Activated naive CD8-positive, alpha-beta T cell treated with anti-CD3 and anti-CD28 coated beads, Interleukin-2, amount 10 ng/mL, durations not matched to agents 7 days and 5 days (primary cell): ENCODE measurements at regions of chr18 and their contacts with region 1.

Region 1: DNA sequence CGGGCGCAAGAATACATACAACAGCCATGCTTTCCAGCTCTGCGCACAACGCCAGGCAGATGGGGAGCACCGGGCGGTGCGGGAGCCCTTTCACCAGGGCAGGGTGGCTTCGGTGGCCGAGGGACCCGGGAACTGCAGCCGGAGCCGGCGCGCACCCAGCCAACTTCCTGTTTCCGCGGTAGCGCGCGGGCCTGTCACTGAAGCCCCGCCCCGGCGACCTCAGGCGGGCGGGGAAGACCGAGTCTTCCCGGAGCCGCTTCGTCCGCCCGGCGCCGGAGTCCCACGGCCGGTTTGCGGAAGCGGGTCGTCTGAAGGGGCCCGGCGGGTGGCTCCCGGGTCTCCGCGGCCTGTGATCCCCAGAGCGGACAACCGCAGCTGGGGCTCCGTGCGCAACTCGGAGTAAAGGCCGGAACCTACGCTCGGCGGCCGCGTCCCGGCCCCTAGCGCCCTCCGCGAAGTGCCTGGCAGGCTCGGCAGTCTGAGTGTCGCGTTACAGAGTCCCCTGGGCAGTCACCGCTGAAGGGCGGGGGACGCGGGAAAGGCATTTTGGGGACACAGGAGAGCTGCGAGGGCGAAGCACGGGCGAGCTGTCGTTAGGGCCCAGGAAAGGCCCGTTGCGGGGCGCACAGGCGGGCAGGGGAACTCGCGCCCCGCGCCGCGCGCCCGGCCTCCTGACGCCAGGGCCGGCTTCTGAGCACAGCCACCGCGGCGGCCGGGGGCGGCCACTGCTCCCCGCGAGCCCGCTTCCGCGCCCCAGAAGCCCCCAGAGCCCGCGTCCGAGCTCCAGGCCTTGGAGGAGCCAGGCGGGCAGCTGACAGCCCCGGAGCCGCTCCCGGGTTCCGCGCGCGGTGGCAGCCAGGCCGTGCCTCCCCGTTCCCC is at the start of gene MPPE1:
- DNase-seq: peak; percentile 92
- ATAC-seq: peak; percentile 93
- H3K4me3 Mint-ChIP-seq: peak within 1 kb of the TSS; percentile 94
- H3K27ac Mint-ChIP-seq: peak within 1 kb of the TSS; percentile 92
- H3K4me1 Mint-ChIP-seq: peaks cover 16% of the 10 kb centered on the region
- H3K27me3 Mint-ChIP-seq: no peaks in the 10 kb centered on the region
- total RNA-seq, gene MPPE1: 60.4 to 61.1 TPM

Region 2: DNA sequence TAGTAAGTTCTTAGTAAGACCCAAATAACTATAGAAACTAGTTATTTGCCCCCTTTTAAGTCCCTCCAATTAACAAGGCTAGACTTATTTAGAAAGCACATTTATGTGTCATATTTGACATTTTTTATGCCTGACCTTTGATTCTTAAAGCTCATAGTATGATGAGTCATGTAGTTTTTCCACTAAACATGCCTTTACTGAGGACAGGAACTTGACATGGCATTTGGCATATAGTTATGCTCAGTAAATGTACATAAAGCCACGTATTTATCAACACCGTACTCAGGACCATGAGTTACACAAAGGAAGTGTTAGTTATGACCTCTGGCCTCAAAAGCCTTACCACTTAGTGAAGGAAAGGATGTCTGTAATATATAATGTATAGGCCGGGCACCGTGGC is 140.5 kb before region 1 on chr18:
- POLR2A ChIA-PET with region 1: no interaction called
- DNase-seq: no peak
- ATAC-seq: no peak
- H3K4me3 Mint-ChIP-seq: no peak overlapping the region
- H3K27ac Mint-ChIP-seq: no peak overlapping the region
- H3K4me1 Mint-ChIP-seq: no peaks in the 10 kb centered on the region
- H3K27me3 Mint-ChIP-seq: peaks cover 4% of the 10 kb centered on the region

Region 3: DNA sequence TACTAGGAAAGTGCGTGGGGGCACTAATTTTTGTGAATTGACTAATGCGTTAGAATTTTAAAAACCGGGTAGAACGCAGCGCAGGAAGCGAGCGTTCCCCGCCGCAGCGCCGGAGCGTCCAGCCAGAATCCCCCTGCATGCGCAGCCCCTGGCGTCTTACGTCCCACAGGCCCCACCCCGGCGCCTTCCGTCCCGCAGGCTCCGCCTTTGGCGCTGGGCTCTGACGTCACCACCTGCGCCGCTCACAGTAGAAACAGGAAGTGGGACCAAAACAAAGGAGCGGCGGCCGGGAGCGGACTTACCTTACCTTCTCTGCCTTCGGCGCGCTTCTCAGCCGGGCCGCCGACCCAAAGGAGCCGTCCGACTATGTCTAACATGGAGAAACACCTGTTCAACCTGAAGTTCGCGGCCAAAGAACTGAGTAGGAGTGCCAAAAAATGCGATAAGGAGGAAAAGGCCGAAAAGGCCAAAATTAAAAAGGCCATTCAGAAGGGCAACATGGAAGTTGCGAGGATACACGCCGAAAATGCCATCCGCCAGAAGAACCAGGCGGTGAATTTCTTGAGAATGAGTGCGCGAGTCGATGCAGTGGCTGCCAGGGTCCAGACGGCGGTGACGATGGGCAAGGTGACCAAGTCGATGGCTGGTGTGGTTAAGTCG is 57.1 kb before region 1 on chr18 and contains the start of gene CHMP1B:
- POLR2A ChIA-PET with region 1: interaction called, 13 read pairs
- DNase-seq: peak; percentile 97
- ATAC-seq: peak; percentile 88
- H3K4me3 Mint-ChIP-seq: peak within 1 kb of the TSS; percentile 100
- H3K27ac Mint-ChIP-seq: peak within 1 kb of the TSS; percentile 100
- H3K4me1 Mint-ChIP-seq: peaks cover 11% of the 10 kb centered on the region
- H3K27me3 Mint-ChIP-seq: peaks cover 2% of the 10 kb centered on the region
- total RNA-seq, gene CHMP1B: 35.1 to 35.2 TPM